Panc1 (cell line): ENCODE measurements at regions of chr7 and their contacts with region 1.

Region 1: GRCh38 chr7:95871078-95871782 is 98.9 kb downstream of the DYNC1I1 start:
- DNase-seq: peak; percentile 38
- ATAC-seq: peak; percentile 82
- H3K4me3 ChIP-seq: no peak overlapping the region
- H3K27ac ChIP-seq: no peak overlapping the region
- H3K4me1 ChIP-seq: no peaks in the 10 kb centered on the region
- H3K27me3 ChIP-seq: peaks cover 3% of the 10 kb centered on the region; the same call in 1 of the 2 replicates
- CTCF ChIP-seq: peak; percentile 78

Region 2: DNA sequence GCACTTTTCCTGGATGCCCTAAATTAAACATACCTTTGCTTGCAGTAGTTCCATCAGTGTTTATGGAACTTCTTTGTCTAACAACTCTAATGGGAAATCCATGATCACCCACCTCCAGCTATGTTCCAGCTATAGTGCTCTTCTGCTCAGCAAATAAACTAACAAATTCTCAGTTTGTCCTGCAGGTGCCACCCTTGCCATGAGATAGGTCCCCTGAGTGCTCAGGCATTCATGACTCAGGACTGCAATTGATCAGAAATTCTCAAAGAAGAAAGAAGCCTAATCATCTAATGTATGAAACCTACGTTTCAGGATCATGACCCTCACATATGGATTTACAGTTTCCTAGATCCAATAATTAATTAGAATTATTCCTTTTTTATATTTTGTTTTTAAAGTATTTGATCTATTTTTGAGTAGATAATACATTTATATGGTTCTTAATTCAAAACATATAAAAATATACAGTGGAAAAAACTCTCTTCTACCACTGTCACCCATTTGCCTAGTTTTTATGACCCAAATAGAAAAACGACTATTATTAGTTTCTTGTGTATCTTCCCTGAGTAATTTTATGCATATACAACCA is 147.5 kb before region 1 on chr7:
- CTCF ChIA-PET with region 1: interaction called, 16 read pairs
- POLR2A ChIA-PET with region 1: no interaction called
- in situ Hi-C with region 1: no loop called
- intact Hi-C with region 1: loop called (anchors 1 kb)
- DNase-seq: peak; percentile 45
- ATAC-seq: peak; percentile 90
- H3K4me3 ChIP-seq: no peak overlapping the region
- H3K27ac ChIP-seq: no peak overlapping the region
- H3K4me1 ChIP-seq: no peaks in the 10 kb centered on the region
- H3K27me3 ChIP-seq: peaks cover 2% of the 10 kb centered on the region
- CTCF ChIP-seq: peak; percentile 65

Region 3: GRCh38 chr7:95788884-95789283 is 82.3 kb before region 1 on chr7:
- CTCF ChIA-PET with region 1: no interaction called
- POLR2A ChIA-PET with region 1: interaction called, 10 read pairs
- in situ Hi-C with region 1: no loop called
- intact Hi-C with region 1: no loop called
- DNase-seq: no peak
- ATAC-seq: no peak
- H3K4me3 ChIP-seq: no peak overlapping the region
- H3K27ac ChIP-seq: no peak overlapping the region
- H3K4me1 ChIP-seq: no peaks in the 10 kb centered on the region
- H3K27me3 ChIP-seq: no peaks in the 10 kb centered on the region
- CTCF ChIP-seq: no peak